Dendritic cell treated with granulocyte-macrophage colony-stimulating factor and Interleukin-4, amounts not matched to agents 40 ng/mL and 50 ng/mL, for 4 days (primary cell): ENCODE measurements at regions of chr17 and their contacts with region 1.

Region 1: DNA sequence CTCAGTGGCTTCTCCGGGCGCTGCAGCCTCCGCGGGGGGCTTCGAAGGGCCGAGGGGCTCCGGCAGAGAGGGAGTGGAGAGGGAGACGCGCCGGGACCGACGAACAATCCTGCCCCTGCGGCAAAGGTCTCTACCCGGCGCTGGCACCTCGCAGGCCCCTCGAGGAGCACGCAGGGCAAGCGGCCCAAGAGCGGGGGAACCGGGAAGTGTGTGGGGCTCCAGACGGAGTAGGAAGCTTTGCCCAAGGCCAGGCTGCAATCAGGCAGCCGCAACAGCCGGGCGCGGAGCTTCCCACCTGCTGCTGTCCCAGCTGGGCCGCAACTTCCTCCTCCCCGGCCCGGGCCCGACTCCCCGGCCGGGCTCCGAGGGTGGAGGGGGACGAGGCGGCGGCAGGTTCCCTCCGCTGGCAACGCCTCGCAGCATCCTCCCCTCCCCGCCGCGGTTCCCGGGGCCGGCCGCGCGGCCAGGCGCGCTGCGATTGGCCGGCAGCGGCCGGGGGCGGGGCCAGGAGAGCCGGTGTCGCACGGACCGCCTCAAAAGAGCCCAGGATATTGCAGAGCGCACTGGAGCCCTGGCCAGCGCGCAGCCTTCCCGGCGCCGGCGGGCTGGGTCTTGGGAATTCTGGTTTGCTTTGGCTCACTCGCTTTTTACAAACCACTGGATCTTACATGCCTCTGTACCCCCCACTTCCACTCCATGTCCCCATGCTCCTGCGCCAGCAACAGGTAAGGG is at the start of gene KCNJ2:
- H3K4me3 Mint-ChIP-seq: peak within 1 kb of the TSS; percentile 85
- H3K27ac Mint-ChIP-seq: peak within 1 kb of the TSS; percentile 96
- H3K4me1 Mint-ChIP-seq: peaks cover 39% of the 10 kb centered on the region
- H3K27me3 Mint-ChIP-seq: peaks cover 4% of the 10 kb centered on the region

Region 2: DNA sequence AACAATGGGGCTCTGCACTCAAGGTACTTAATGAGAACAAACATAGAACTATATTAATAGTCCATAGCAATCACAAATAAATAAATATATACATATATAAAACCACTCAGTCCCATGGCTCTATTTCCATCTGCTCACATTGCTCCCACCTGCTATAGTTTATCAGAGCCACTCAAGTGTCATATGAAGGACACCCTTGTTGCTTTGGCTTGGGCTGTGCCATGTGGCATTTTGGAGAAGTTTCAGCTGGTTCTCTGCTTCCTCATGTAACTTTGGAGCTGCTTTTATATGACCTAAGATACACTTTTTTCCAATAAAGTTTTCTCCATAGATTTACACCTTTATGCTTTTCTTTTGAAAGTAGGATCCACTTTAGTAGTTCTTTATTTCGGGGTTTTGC is 126.6 kb after region 1 on chr17:
- intact Hi-C with region 1: loop called (anchors 5 kb)
- H3K4me3 Mint-ChIP-seq: no peak overlapping the region
- H3K27ac Mint-ChIP-seq: peak overlapping the region; percentile 94
- H3K4me1 Mint-ChIP-seq: peaks cover 61% of the 10 kb centered on the region
- H3K27me3 Mint-ChIP-seq: no peaks in the 10 kb centered on the region

Region 3: DNA sequence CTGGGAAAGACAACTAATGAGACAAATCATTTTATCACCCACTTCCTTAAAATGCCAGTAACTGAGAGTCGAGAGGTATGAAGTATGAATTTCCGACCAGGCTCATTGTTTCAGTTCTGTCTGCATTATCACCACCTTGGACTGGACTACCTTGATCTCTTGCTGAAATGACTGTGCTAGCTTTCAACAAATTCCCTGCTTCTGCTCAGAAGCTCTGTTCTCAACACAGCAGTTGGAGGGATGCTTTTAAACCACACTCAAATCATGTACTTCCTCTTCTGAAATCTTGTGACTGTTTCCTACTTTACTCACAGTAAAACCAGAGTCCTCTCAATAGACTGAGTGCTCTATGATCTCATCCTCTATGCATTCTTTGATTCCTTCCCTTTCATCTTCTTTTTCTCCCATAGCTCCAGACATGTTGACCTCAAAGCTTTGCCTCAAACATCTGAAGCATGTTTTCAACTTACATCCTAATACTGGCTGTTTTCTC is 196.0 kb after region 1 on chr17:
- intact Hi-C with region 1: loop called (anchors 10 kb)
- H3K4me3 Mint-ChIP-seq: no peak overlapping the region
- H3K27ac Mint-ChIP-seq: peak overlapping the region; percentile 77
- H3K4me1 Mint-ChIP-seq: peaks cover 27% of the 10 kb centered on the region
- H3K27me3 Mint-ChIP-seq: peaks cover 16% of the 10 kb centered on the region

Region 4: GRCh38 chr17:70499067-70499786 is 330.1 kb after region 1 on chr17:
- intact Hi-C with region 1: loop called (anchors 10 kb)
- H3K4me3 Mint-ChIP-seq: no peak overlapping the region
- H3K27ac Mint-ChIP-seq: peak overlapping the region; percentile 74
- H3K4me1 Mint-ChIP-seq: peaks cover 32% of the 10 kb centered on the region
- H3K27me3 Mint-ChIP-seq: no peaks in the 10 kb centered on the region

Region 5: GRCh38 chr17:70552230-70552981 is 383.3 kb after region 1 on chr17:
- intact Hi-C with region 1: loop called (anchors 5 kb)
- H3K4me3 Mint-ChIP-seq: no peak overlapping the region
- H3K27ac Mint-ChIP-seq: no peak overlapping the region
- H3K4me1 Mint-ChIP-seq: peaks cover 17% of the 10 kb centered on the region
- H3K27me3 Mint-ChIP-seq: no peaks in the 10 kb centered on the region

Region 6: GRCh38 chr17:70912716-70913485 is 743.8 kb after region 1 on chr17:
- intact Hi-C with region 1: no loop called
- H3K4me3 Mint-ChIP-seq: no peak overlapping the region
- H3K27ac Mint-ChIP-seq: no peak overlapping the region
- H3K4me1 Mint-ChIP-seq: no peaks in the 10 kb centered on the region
- H3K27me3 Mint-ChIP-seq: no peaks in the 10 kb centered on the region